Activated CD4-positive, alpha-beta memory T cell treated with anti-CD3 and anti-CD28 coated beads for 36 hours (primary cell): ENCODE measurements at regions of chr2 and their contacts with region 1.

Region 1: GRCh38 chr2:73931531-73932500 is 5.1 kb downstream of the DGUOK start:
- DNase-seq: peak; percentile 77
- H3K4me3 Mint-ChIP-seq: peak overlapping the region; percentile 4
- H3K27ac Mint-ChIP-seq: peak overlapping the region; percentile 75
- H3K4me1 Mint-ChIP-seq: peaks cover 75% of the 10 kb centered on the region
- H3K27me3 Mint-ChIP-seq: no peaks in the 10 kb centered on the region

Region 2: DNA sequence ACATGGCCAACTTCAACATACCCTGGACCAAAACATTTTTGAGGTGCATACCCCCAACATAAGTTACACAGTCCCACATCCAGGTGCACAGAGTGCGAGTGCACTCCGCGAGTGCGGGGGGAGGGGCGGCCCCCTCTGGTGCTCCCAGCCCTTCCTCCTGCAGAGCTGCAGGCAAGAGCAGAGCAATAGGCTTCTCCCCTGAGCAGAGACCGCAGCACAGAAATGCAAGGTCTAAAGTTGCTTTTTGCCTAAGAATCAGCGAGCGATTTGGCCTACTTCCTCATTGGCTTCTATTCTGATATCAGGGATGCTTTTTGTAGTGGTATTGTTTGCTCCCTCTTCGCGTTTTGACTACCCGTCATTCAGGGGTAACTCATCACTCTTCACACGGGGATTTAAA is 175.3 kb after region 1 on chr2:
- CTCF ChIA-PET with region 1: no interaction called
- POLR2A ChIA-PET with region 1: no interaction called
- intact Hi-C with region 1: no loop called
- DNase-seq: no peak
- H3K4me3 Mint-ChIP-seq: no peak overlapping the region
- H3K27ac Mint-ChIP-seq: no peak overlapping the region
- H3K4me1 Mint-ChIP-seq: peaks cover 3% of the 10 kb centered on the region
- H3K27me3 Mint-ChIP-seq: no peaks in the 10 kb centered on the region

Region 3: DNA sequence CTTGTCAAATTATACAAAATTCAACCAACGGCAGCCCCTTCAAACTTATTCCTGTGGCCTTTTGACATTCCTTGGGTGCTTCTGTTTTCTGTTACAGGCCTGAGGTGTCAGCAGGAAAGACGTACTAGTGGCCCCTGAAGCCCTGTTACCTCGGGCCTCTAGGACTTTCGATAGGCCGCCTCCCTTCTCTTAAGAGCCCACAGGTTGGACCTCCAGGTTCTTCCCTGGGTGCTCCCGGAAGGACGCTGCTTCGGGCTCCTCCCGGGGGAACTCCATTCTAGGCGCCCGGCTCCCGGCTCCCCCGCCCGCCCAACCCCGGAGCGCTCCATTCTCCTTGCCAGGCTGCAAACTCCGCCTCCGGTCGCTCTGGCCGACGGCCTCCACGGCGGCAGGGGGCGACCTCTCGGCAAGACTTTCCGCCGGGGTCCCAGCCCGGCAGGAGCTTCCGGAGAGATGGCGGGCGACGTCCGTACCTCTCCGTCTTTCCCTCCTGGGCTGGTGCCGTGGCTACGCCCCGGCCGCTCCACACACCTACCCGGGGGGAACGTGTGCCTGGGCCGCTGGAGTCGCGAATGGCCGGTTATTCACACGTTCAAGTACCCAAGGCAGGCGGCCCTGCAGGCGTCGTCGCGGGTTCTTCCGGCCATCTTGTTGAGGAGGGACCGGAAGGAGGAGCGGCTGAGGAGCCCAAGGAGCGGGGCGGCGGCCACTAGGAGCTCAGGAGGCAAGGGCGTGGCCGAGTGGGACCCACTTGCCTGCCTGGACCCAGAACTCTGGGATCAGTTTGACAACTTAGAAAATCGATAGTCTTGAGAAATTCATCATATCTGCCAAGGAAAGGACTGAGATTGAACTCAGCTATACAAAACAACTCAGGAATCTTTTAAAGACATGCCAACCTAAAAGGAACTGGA is 188.4 kb after region 1 on chr2:
- CTCF ChIA-PET with region 1: interaction called, 4 read pairs
- POLR2A ChIA-PET with region 1: no interaction called
- intact Hi-C with region 1: loop called (anchors 5 kb)
- DNase-seq: peak; percentile 91
- H3K4me3 Mint-ChIP-seq: peak overlapping the region; percentile 84
- H3K27ac Mint-ChIP-seq: peak overlapping the region; percentile 88
- H3K4me1 Mint-ChIP-seq: peaks cover 8% of the 10 kb centered on the region
- H3K27me3 Mint-ChIP-seq: no peaks in the 10 kb centered on the region